ENCODE measurements at regions of chr11 and their contacts with region 1.

Region 1: GRCh38 chr11:6251120-6251733 is 8.4 kb upstream of the CCKBR start:
- DNase-seq: peak; percentile 79
- H3K4me3 ChIP-seq: no peak overlapping the region; a peak in 1 of 4 replicates
- H3K27ac ChIP-seq: no peak overlapping the region
- H3K4me1 ChIP-seq: no peaks in the 10 kb centered on the region; a peak in 1 of 4 replicates
- H3K27me3 ChIP-seq: peaks cover 8% of the 10 kb centered on the region; the same call in 1 of the 2 replicates
- CTCF ChIP-seq: peak; percentile 73
- EP300 ChIP-seq: no peak
- RAD21 ChIP-seq: peak; percentile 62

Region 2: DNA sequence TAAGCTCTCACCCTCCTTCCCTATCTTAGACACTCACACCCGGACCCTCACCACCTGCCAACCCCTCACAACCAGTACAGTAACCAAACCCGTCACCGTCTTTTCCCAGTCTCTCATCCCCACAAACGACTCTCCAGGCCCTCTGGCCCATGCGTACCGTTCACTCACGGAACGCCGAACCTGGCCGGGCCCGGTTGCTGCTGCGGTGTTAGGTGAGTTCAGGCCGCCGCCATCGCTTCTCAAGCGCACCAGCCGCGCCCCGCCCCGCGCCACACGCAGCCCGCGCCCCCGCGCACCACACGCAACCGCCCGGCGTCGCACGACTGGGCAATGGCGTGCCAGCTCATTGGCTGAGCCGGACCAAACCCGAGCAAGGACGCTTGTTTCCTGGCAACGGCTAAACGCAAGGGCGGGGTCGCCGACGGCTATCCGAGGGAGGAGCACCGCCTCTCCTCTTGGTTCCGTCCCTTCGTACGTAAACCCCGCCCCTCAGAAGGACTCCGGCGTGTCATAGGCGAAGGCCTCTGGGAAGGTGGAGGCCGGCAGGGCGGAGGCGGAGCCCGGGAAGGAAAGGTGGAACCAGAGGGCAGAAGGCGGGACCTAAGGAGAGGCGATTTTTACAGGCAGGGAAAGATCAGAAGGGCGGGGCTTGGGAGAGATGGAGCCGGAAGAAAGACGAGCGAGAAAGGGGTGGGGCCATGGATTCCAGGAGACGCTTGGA is 16.7 kb before region 1 on chr11 and contains the start of gene FHIP1B:
- CTCF ChIA-PET with region 1: interaction called, 11 read pairs
- POLR2A ChIA-PET with region 1: no interaction called
- DNase-seq: peak; percentile 95
- H3K4me3 ChIP-seq: peak within 1 kb of the TSS; percentile 67 to 90
- H3K27ac ChIP-seq: peak within 1 kb of the TSS; percentile 69 to 79
- H3K4me1 ChIP-seq: peaks cover 0 to 8% of the 10 kb centered on the region in 2 experiments; a peak in 1 of 4 replicates
- H3K27me3 ChIP-seq: peaks cover 12% of the 10 kb centered on the region
- CTCF ChIP-seq: no peak
- EP300 ChIP-seq: no peak
- RAD21 ChIP-seq: no peak
- polyA plus RNA-seq, gene FHIP1B: 26.3 and 38.2 TPM in 2 replicates

Region 3: GRCh38 chr11:6240781-6241180 is 10.4 kb before region 1 on chr11:
- CTCF ChIA-PET with region 1: interaction called, 13 read pairs
- POLR2A ChIA-PET with region 1: no interaction called
- DNase-seq: no peak
- H3K4me3 ChIP-seq: no peak overlapping the region
- H3K27ac ChIP-seq: no peak overlapping the region
- H3K4me1 ChIP-seq: no peaks in the 10 kb centered on the region
- H3K27me3 ChIP-seq: peaks cover 44% of the 10 kb centered on the region
- CTCF ChIP-seq: no peak
- EP300 ChIP-seq: no peak
- RAD21 ChIP-seq: no peak

Region 4: DNA sequence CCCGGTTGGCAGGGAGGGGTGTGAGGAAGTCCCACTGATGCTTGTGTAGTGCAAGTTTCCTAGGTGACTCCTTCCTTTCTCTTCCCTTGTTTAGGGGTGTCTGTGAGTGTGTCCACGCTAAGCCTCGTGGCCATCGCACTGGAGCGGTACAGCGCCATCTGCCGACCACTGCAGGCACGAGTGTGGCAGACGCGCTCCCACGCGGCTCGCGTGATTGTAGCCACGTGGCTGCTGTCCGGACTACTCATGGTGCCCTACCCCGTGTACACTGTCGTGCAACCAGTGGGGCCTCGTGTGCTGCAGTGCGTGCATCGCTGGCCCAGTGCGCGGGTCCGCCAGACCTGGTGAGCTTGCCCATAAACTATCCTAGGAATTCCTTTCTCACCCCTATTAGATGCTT is 18.8 kb after region 1 on chr11:
- CTCF ChIA-PET with region 1: interaction called, 17 read pairs
- POLR2A ChIA-PET with region 1: no interaction called
- DNase-seq: peak; percentile 48
- H3K4me3 ChIP-seq: no peak overlapping the region
- H3K27ac ChIP-seq: no peak overlapping the region
- H3K4me1 ChIP-seq: no peaks in the 10 kb centered on the region; a peak in 1 of 4 replicates
- H3K27me3 ChIP-seq: peaks cover 17% of the 10 kb centered on the region; the same call in 1 of the 2 replicates
- CTCF ChIP-seq: peak; percentile 50
- EP300 ChIP-seq: no peak
- RAD21 ChIP-seq: peak; percentile 22

Region 5: GRCh38 chr11:6298605-6299004 is 47.4 kb after region 1 on chr11:
- CTCF ChIA-PET with region 1: interaction called, 10 read pairs
- POLR2A ChIA-PET with region 1: no interaction called
- DNase-seq: peak; percentile 27
- H3K4me3 ChIP-seq: no peak overlapping the region
- H3K27ac ChIP-seq: no peak overlapping the region
- H3K4me1 ChIP-seq: no peaks in the 10 kb centered on the region
- H3K27me3 ChIP-seq: peaks cover 17% of the 10 kb centered on the region; the same call in 1 of the 2 replicates
- CTCF ChIP-seq: peak; percentile 58
- EP300 ChIP-seq: no peak
- RAD21 ChIP-seq: peak; percentile 26; the same call in 1 of the 2 replicates

Region 6: DNA sequence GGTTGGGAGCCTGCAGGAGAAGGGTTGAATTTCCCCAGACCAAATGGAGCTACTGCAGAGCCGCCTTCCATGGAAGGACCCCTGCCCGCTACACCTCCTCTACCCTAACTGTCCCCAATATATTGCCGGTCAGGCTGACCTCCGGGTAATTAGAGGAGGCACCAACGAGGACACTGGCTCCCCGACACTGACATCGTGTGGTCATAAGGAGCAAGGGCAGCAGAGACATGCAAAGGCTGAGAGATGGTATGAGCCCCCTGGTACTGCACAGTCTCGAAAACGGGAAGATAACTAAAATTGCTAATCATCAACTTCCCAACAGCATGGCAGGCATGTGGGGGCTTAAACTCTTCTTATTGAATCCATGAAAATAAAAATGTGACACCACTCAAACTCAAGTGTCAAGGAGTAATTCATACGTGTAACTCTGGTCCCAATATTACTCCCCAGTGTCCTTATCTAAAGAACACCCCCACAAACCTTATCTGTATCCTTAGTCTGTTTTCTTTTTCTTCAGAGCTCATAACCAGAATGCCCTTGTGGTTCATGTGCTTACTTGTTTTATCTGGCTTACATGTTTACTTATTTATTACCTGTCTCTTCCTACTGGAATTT is 64.7 kb after region 1 on chr11:
- CTCF ChIA-PET with region 1: interaction called, 36 read pairs
- POLR2A ChIA-PET with region 1: no interaction called
- DNase-seq: peak; percentile 79
- H3K4me3 ChIP-seq: no peak overlapping the region
- H3K27ac ChIP-seq: no peak overlapping the region
- H3K4me1 ChIP-seq: no peaks in the 10 kb centered on the region; a peak in 1 of 4 replicates
- H3K27me3 ChIP-seq: peaks cover 5% of the 10 kb centered on the region; the same call in 1 of the 2 replicates
- CTCF ChIP-seq: peak; percentile 80
- EP300 ChIP-seq: no peak
- RAD21 ChIP-seq: peak; percentile 77

Region 7: DNA sequence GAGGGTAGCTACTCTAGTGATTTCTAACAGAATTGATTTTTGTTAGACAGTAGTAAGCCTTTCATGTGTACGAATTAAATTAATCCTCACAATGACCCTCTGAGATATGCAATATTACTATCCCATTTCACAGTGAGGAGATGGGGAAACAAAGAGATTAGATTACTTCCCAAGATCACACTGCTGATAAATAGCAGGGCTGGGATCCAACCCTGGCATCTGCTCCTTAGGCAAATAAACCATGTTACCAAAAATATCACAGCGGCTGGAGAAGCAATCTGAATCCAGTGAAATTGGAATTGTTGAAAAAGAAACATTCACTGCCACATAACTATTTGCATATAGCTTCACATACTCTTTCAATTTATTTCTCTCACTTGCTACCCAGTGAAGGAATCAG is 81.9 kb after region 1 on chr11:
- CTCF ChIA-PET with region 1: interaction called, 12 read pairs
- POLR2A ChIA-PET with region 1: no interaction called
- DNase-seq: peak; percentile 26
- H3K4me3 ChIP-seq: no peak overlapping the region
- H3K27ac ChIP-seq: no peak overlapping the region
- H3K4me1 ChIP-seq: peaks cover 0 to 2% of the 10 kb centered on the region in 2 experiments; a peak in 2 of 4 replicates
- H3K27me3 ChIP-seq: peaks cover 15% of the 10 kb centered on the region; the same call in 1 of the 2 replicates
- CTCF ChIP-seq: no peak
- EP300 ChIP-seq: peak in 1 of 2 experiments; percentile 23; a peak in 1 of 4 replicates
- RAD21 ChIP-seq: no peak